Right cardiac atrium (tissue), 5 donors: ENCODE measurements at regions of chr9 and their contacts with region 1.

Region 1: GRCh38 chr9:12775679-12776512 is 1.1 kb downstream of the LURAP1L start:
- DNase-seq: peak; percentile 34 to 76 (median 75)
- ATAC-seq: peak; percentile 96
- H3K4me3 ChIP-seq: peak overlapping the region; percentile 65
- H3K27ac ChIP-seq: peak overlapping the region; percentile 54
- H3K4me1 ChIP-seq: no peaks in the 10 kb centered on the region
- H3K27me3 ChIP-seq: no peaks in the 10 kb centered on the region

Region 2: DNA sequence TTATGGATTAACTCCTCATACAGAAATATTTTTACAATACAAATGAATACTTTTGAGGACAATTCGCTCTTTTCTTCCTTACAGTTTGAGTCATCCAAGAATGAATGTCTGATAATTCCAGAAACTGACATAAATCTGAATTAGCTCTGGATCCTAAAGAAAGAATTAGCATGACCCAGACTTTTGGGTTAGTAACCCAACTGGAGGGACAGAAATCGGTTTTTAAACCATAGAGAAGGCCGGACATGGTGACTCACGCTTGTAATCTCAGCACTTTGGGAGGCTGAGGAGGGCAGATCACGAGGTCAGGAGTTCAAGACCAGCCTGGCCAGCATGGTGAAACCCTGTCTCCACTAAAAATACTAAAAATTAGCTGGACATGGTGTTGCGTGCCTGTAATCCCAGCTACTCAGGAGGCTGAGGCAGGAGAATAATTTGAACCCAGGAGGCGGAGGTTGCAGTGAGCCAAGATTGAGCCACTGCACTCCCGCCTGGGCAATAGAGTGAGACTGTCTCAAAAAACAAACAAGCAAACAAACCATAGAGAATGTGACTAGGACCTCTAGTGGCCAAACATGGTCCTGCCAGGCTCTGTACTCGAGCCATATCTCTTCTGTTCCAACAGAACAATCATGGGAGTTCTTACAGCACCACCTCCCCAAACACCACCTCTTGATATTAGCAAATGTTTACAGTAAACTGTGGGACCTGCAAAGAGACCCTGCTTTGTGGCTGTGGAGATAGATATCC is 43.7 kb after region 1 on chr9:
- intact Hi-C with region 1: loop called in 1 of 4 experiments (anchors 5 kb)
- DNase-seq: no peak
- ATAC-seq: no peak
- H3K4me3 ChIP-seq: no peak overlapping the region
- H3K27ac ChIP-seq: no peak overlapping the region
- H3K4me1 ChIP-seq: no peaks in the 10 kb centered on the region
- H3K27me3 ChIP-seq: no peaks in the 10 kb centered on the region